ENCODE measurements at regions of chr16 and their contacts with region 1.

Region 1: GRCh38 chr16:86457501-86458148 is 52.7 kb upstream of the FOXF1 start:
- DNase-seq: peak; percentile 94
- H3K4me3 ChIP-seq: no peak overlapping the region
- H3K27ac ChIP-seq: peak overlapping the region; percentile 83 to 88 (median 86)
- H3K4me1 ChIP-seq: peaks cover 3 to 53% (median 44%) of the 10 kb centered on the region in 4 donors
- H3K27me3 ChIP-seq: no peaks in the 10 kb centered on the region
- CTCF ChIP-seq: no peak
- EP300 ChIP-seq: peak; percentile 87 to 96 (median 94)
- POLR2A ChIP-seq: no peak

Region 2: DNA sequence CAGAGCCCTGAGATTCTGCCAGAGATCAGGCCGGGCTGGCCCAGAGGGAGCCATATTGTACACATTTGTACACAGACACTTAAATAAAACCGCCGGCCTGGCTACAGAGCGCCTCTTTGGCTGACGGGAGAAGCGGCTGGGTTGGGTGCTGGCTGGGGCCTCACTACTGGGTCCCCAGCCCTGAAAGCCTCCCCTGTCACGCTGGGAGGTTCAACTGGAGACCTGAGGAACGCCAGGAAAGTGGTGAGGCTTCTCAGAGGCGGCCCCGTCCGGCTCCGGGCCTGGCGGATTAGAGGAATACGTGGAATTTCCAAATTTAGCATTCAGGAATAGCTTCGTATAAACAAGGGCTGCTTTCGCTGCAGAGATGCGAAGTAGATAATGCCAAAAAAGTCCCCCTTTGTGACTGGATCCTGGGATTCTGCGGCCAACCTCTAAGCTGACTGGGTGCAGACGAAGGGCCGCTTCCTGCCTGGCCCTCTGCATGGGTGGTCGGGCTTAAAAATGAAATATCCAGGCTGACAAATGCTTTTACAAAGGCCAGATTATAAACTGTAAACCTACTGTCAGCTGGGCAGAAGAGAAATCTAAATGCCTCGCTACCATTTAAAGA is 306.3 kb before region 1 on chr16:
- intact Hi-C with region 1: loop called (anchors 5 kb)
- DNase-seq: peak; percentile 87
- H3K4me3 ChIP-seq: peak overlapping the region in 2 of 4 donors; percentile 2 to 20
- H3K27ac ChIP-seq: peak overlapping the region; percentile 84 to 90 (median 88)
- H3K4me1 ChIP-seq: peaks cover 0 to 64% (median 43%) of the 10 kb centered on the region in 4 donors
- H3K27me3 ChIP-seq: no peaks in the 10 kb centered on the region
- CTCF ChIP-seq: no peak
- EP300 ChIP-seq: peak; percentile 36 to 76 (median 56)
- POLR2A ChIP-seq: peak in 1 of 2 donors; percentile 7

Region 3: DNA sequence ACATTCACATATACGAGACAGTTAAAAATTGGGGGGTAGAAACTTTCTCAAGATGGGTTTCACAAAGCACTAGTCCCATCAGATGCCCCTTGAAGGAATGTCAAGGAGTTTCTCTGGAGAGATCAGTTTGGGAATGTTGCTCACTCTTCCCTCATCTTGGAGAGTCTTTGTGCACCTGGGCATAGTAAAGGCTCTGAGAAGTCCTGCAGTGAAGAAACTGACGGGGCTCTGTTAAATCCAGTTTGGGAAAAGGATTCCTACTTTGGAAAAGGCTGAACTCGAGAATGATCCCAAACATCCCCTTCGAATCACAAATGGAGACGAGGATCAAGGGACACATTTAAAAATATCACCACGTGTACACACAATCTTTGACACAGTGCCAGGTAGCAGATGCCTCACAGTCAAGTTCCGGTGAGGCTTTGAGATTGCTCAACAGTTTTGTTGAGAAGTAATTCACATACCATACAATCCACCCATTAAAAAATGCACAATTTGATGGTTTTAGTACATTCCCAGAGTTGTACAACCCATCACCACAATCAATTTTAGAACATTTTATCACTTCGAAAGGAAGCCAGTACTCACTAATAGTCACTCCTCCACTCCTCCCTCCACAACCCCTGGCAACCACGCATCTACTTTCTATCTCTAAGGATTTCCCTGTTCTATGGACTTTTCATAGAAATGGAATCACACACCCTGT is 150.7 kb before region 1 on chr16:
- intact Hi-C with region 1: loop called (anchors 2 kb)
- DNase-seq: peak; percentile 32
- H3K4me3 ChIP-seq: no peak overlapping the region
- H3K27ac ChIP-seq: peak overlapping the region; percentile 25 to 96 (median 94)
- H3K4me1 ChIP-seq: peaks cover 0 to 57% (median 49%) of the 10 kb centered on the region in 4 donors
- H3K27me3 ChIP-seq: no peaks in the 10 kb centered on the region
- CTCF ChIP-seq: no peak
- EP300 ChIP-seq: no peak
- POLR2A ChIP-seq: no peak

Region 4: DNA sequence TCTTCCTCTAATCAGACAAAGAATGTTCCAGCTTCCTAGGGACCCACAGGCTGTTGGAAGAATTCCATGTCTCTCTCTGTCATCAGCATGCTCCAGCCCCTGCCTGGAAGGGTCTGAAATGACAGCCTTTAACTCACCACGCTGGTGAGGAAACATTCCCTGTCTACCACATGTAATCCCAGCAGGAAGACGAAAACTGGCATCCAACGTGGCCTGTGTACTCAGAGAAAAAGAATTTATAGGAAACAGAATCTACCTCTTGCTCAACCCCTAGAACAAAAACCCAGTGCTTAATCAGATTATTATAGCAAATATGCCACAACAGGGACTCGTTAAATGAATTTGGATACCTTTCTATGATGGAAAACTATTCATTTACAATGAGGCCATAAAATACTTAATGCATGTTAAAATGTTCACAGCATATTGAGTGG is 94.6 kb before region 1 on chr16:
- intact Hi-C with region 1: loop called (anchors 1 kb)
- DNase-seq: peak; percentile 88
- H3K4me3 ChIP-seq: no peak overlapping the region
- H3K27ac ChIP-seq: peak overlapping the region; percentile 83 to 89 (median 85)
- H3K4me1 ChIP-seq: peaks cover 0 to 56% (median 46%) of the 10 kb centered on the region in 4 donors
- H3K27me3 ChIP-seq: no peaks in the 10 kb centered on the region
- CTCF ChIP-seq: no peak
- EP300 ChIP-seq: peak in 3 of 4 donors; percentile 25 to 84 (median 52)
- POLR2A ChIP-seq: no peak

Region 5: DNA sequence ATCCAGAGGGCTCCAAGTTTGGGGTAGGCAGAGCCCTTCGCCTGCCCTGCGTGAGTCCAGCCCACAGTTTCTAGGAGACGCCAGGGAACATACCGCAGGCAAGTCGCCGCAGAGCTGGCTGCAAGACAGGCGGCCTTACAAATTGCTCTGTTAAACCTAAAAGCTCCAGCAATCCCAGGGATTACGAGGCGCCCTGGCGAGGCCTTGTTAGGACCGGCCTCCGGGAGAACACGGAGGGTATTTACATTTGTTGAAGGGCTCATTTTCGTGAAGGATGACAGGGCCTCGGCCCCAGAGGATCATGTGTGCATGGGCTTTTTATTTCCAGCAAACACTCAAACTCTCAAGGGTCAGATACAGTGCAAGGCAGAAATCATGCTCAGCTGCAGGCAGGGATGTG is 24.9 kb before region 1 on chr16:
- intact Hi-C with region 1: loop called (anchors 2 kb)
- DNase-seq: peak; percentile 95
- H3K4me3 ChIP-seq: no peak overlapping the region
- H3K27ac ChIP-seq: peak overlapping the region; percentile 81 to 91 (median 87)
- H3K4me1 ChIP-seq: peaks cover 0 to 67% (median 61%) of the 10 kb centered on the region in 4 donors
- H3K27me3 ChIP-seq: no peaks in the 10 kb centered on the region
- CTCF ChIP-seq: no peak
- EP300 ChIP-seq: peak; percentile 81 to 97 (median 86)
- POLR2A ChIP-seq: no peak

Region 6: GRCh38 chr16:86508947-86509758 is 51.5 kb after region 1 on chr16:
- intact Hi-C with region 1: loop called (anchors 2 kb)
- DNase-seq: peak; percentile 93
- H3K4me3 ChIP-seq: peak overlapping the region; percentile 81 to 95 (median 86)
- H3K27ac ChIP-seq: peak overlapping the region; percentile 99 to 100 (median 99)
- H3K4me1 ChIP-seq: peaks cover 0 to 27% (median 3%) of the 10 kb centered on the region in 4 donors
- H3K27me3 ChIP-seq: peaks cover 0 to 4% (median 0%) of the 10 kb centered on the region in 3 donors
- CTCF ChIP-seq: no peak
- EP300 ChIP-seq: peak in 3 of 4 donors; percentile 6 to 35 (median 33)
- POLR2A ChIP-seq: peak; percentile 24 to 40

Region 7: GRCh38 chr16:86680162-86680561 is 222.5 kb after region 1 on chr16:
- intact Hi-C with region 1: no loop called
- DNase-seq: peak; percentile 48
- H3K4me3 ChIP-seq: no peak overlapping the region
- H3K27ac ChIP-seq: peak overlapping the region in 2 of 4 donors; percentile 41 to 45
- H3K4me1 ChIP-seq: no peaks in the 10 kb centered on the region
- H3K27me3 ChIP-seq: peaks cover 5 to 55% (median 5%) of the 10 kb centered on the region in 3 donors
- CTCF ChIP-seq: no peak
- EP300 ChIP-seq: no peak
- POLR2A ChIP-seq: no peak